GM10248 (cell line): ENCODE measurements at regions of chr22 and their contacts with region 1.

Region 1: GRCh38 chr22:37428649-37429586 is 1.6 kb upstream of the ELFN2 start:
- DNase-seq: peak; percentile 78
- CTCF ChIP-seq: peak; percentile 81

Region 2: GRCh38 chr22:37439347-37439746 is 10.4 kb after region 1 on chr22:
- CTCF ChIA-PET with region 1: interaction called, 27 read pairs
- POLR2A ChIA-PET with region 1: no interaction called
- DNase-seq: no peak
- CTCF ChIP-seq: no peak